ENCODE measurements at regions of chr17 and their contacts with region 1.

Region 1: DNA sequence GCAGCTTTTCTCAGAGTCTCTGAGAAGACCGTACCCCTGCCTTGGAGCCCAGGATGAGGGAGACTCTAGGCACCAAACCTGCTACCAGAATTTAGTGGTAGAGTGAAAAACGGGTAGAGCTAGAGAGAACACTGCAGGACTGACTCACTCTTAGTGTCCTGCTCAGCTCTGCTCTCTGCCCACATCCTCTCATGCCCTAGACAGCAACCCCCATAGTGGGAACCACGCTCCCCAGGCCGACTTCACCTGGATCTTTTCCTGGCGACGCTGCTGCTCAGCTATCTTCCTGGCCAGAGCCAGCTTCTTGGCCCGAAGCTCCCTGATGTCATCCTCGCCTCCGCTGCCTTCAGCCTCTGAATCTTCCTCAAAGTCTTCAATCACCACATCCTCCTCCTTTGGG is 26.7 kb downstream of the HIC1 start:
- DNase-seq: no peak
- H3K4me3 ChIP-seq: no peak overlapping the region
- H3K27me3 ChIP-seq: no peaks in the 10 kb centered on the region
- CTCF ChIP-seq: no peak

Region 2: DNA sequence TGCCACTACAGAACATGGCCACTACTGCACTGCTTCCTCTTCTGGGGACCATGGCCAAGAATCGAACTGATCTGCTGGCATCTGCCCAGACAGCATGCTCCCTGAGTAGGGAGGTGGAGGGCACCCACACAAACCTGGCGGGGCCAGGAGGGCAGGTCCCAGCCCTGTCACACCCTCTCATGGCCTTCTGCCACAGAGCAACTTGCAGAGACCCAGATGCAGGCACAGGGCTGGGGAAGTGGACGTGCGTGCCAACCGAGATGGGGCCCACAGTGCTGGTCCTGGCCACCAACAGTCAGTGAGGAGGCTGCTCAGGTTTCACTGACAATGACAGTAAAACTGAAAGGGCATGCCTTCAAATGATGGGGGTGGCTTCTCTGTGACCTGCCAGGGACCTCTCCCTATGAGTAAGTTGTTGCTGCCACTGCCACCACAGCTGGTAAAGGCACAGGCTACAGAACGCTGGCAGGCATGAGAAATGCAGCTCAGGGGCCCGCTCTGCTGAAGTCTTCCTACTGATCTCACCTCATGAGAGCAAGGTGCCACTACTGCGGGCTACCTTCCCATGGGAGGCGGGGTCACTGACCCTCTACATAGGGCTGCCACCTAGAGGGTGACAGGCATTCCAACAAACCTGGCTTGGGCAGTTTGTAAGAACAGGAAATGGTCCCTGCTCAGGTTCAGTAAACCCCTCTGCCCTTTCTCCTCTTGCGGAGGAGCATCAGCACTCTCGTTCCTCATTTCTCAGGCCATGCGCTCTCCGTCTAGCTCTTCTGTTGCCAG is 11.1 kb before region 1 on chr17:
- CTCF ChIA-PET with region 1: interaction called, 11 read pairs
- POLR2A ChIA-PET with region 1: no interaction called
- DNase-seq: no peak
- H3K4me3 ChIP-seq: no peak overlapping the region
- H3K27me3 ChIP-seq: no peaks in the 10 kb centered on the region
- CTCF ChIP-seq: no peak